Left ventricle myocardium inferior (tissue), 1 donor: ENCODE measurements at regions of chr18 and their contacts with region 1.

Region 1: DNA sequence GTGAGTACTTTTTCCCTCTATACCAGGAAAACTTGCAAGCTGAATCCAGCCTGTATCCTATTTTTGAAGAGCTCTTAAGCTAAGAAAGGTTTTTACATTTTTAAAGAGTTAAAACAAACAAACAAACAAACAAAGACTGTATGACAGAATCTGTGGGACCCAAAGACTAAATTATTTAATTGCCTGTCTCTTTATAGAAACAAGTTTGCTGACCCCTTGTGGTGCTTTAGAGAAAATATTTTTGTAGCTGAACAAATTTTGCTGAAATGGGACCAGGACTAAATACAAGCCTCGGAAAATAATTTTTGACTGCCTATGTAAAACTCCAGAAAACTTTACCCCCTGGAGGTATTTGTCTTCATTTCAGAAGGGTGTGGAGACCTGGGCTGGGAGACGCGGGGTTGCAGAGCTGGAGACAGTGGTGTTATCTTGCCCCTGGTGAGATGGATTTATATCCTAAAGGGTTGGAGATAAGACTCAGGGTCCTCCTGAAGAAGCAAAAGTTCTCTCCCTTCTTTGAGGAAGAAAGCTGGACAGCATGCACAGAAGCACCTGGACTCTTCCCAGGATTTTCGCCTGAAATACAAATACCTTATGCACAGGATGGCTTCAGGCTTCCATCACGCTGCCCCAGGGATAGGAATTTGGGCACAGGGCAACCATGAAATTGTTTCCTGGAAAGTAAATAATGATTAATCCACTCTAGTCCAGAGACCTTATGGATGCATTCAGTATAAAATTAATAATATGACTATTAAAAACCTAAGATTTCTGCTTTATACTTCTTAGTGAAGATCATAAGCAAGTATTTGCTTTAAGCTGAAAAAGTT is 54.3 kb downstream of the TMX3 start:
- DNase-seq: no peak
- H3K4me3 ChIP-seq: no peak overlapping the region
- H3K27ac ChIP-seq: no peak overlapping the region
- H3K4me1 ChIP-seq: no peaks in the 10 kb centered on the region
- H3K27me3 ChIP-seq: no peaks in the 10 kb centered on the region
- CTCF ChIP-seq: peak; percentile 63

Region 2: DNA sequence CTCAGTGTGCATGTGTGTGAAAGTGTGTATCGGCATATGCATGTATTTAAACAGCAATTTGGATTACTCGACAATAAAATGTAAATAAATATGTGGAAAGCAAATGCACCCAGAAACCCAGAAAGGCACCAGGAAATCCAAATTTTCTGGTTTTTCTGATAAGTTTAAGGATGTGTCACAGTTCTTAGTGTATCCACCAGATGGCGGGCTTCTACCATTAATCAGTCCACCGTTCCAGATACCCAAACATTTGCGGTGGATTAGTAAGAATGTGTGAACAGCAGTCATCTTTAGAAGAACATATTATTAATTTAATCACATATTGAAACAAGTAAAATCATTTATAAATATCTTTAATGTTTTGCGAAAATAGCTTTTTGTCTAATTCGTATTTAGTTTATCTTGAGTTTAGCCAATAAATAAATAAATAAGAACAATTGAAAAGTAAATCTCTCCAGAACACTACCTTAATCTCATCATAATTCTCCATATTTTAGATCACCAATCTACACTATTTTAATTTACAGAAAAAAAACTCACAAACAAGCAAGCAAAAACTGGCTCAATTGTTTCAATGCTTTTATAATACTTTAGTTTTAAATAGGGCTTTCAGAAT is 1442.9 kb before region 1 on chr18:
- intact Hi-C with region 1: loop called (anchors 5 kb)
- DNase-seq: no peak
- H3K4me3 ChIP-seq: no peak overlapping the region
- H3K27ac ChIP-seq: no peak overlapping the region
- H3K4me1 ChIP-seq: no peaks in the 10 kb centered on the region
- H3K27me3 ChIP-seq: peaks cover 21% of the 10 kb centered on the region
- CTCF ChIP-seq: peak; percentile 88